ENCODE measurements at regions of chr15 and their contacts with region 1.

Region 1: GRCh38 chr15:48975472-48976419 is 12.0 kb upstream of the SHC4 start:
- DNase-seq: peak; percentile 89
- ATAC-seq: peak; percentile 98
- H3K4me3 Mint-ChIP-seq: peak overlapping the region; percentile 46
- H3K27ac Mint-ChIP-seq: no peak overlapping the region
- H3K4me1 Mint-ChIP-seq: peaks cover 2% of the 10 kb centered on the region
- H3K27me3 Mint-ChIP-seq: peaks cover 13% of the 10 kb centered on the region

Region 2: DNA sequence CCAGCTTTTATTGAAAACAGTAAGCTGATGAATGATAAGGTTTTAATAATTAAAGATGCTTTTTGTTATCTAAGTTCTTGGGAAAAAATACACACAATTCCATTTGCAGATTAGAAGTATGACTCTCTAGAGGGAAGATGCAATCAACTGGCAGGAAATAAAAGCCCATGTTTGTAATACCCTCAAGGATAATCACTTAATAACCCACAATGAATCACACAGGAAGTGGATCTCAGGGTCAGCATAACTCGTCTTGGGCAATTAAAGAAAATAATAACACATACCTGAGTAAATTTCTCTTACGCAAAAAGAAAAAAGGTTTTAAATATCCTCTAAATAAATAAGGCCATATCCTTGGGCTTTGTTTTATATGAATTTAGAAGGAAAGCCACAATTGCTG is 107.2 kb before region 1 on chr15:
- CTCF ChIA-PET with region 1: interaction called, 14 read pairs
- POLR2A ChIA-PET with region 1: no interaction called
- intact Hi-C with region 1: no loop called
- DNase-seq: no peak
- ATAC-seq: no peak
- H3K4me3 Mint-ChIP-seq: no peak overlapping the region
- H3K27ac Mint-ChIP-seq: no peak overlapping the region
- H3K4me1 Mint-ChIP-seq: no peaks in the 10 kb centered on the region
- H3K27me3 Mint-ChIP-seq: peaks cover 23% of the 10 kb centered on the region

Region 3: GRCh38 chr15:48905847-48906246 is 69.9 kb before region 1 on chr15:
- CTCF ChIA-PET with region 1: interaction called, 11 read pairs
- POLR2A ChIA-PET with region 1: no interaction called
- intact Hi-C with region 1: no loop called
- DNase-seq: no peak
- ATAC-seq: peak; percentile 39
- H3K4me3 Mint-ChIP-seq: no peak overlapping the region
- H3K27ac Mint-ChIP-seq: no peak overlapping the region
- H3K4me1 Mint-ChIP-seq: peaks cover 19% of the 10 kb centered on the region
- H3K27me3 Mint-ChIP-seq: peaks cover 3% of the 10 kb centered on the region

Region 4: GRCh38 chr15:48946088-48946839 is 29.5 kb before region 1 on chr15:
- CTCF ChIA-PET with region 1: interaction called, 25 read pairs
- POLR2A ChIA-PET with region 1: no interaction called
- intact Hi-C with region 1: no loop called
- DNase-seq: no peak
- ATAC-seq: peak; percentile 93
- H3K4me3 Mint-ChIP-seq: no peak overlapping the region
- H3K27ac Mint-ChIP-seq: peak overlapping the region; percentile 7
- H3K4me1 Mint-ChIP-seq: peaks cover 13% of the 10 kb centered on the region
- H3K27me3 Mint-ChIP-seq: peaks cover 20% of the 10 kb centered on the region

Region 5: GRCh38 chr15:48963524-48964113 is 12.1 kb before region 1 on chr15 and contains the start of gene SHC4:
- CTCF ChIA-PET with region 1: interaction called, 72 read pairs
- POLR2A ChIA-PET with region 1: interaction called, 4 read pairs
- intact Hi-C with region 1: no loop called
- DNase-seq: peak; percentile 29
- ATAC-seq: peak; percentile 45
- H3K4me3 Mint-ChIP-seq: peak within 1 kb of the TSS; percentile 69
- H3K27ac Mint-ChIP-seq: peak within 1 kb of the TSS; percentile 84
- H3K4me1 Mint-ChIP-seq: peaks cover 34% of the 10 kb centered on the region
- H3K27me3 Mint-ChIP-seq: peaks cover 38% of the 10 kb centered on the region
- total RNA-seq, gene SHC4: 1.4 TPM

Region 6: DNA sequence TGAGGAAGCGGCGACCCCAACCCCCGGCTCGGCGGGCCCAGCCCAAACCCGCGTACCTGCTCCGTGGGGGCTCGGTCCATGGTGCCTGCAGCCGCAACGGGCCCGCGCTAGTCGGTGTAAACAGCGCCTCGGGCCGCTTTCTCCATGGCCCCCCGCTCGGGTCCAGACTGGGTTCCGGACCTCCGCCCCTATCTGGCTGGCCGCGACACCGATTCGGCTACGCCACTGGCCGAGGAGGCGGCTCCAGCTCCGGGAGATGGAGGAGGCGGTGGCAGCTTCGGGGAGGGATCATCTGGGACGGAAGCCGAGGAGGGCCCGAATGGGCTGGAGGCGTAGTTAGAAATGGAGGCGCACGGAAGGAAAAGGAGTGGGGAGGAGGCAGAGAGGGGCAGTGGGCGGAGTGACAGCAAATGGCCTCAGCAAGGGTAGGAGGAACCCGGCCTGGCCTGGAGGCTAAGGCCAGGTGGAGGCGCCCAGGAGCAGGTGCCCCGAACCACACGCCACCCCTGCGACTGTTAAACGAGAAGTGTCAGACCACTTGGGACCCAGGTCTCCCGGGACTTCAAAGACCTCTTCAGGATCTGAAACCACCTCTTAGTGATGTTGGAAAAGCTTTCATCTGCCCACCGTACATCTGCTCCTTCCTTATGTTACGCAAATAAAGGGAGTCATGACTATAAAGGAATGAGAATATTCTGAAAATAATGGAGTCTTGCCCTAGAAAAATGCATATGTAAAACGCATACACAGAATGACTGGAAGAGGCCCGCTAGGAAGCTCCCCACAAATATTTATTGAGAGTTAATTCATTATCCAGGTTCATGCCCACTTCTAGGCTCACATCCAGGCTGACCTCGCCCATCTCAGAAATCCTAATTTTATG is 70.7 kb after region 1 on chr15 and contains the start of gene SECISBP2L:
- CTCF ChIA-PET with region 1: interaction called, 6 read pairs
- POLR2A ChIA-PET with region 1: no interaction called
- intact Hi-C with region 1: loop called in 1 of 2 experiments (anchors 2 kb)
- DNase-seq: peak; percentile 95
- ATAC-seq: peak; percentile 97
- H3K4me3 Mint-ChIP-seq: peak within 1 kb of the TSS; percentile 92
- H3K27ac Mint-ChIP-seq: peak within 1 kb of the TSS; percentile 84
- H3K4me1 Mint-ChIP-seq: peaks cover 22% of the 10 kb centered on the region
- H3K27me3 Mint-ChIP-seq: no peaks in the 10 kb centered on the region
- total RNA-seq, gene SECISBP2L: 22.4 to 36.8 TPM

Region 7: GRCh38 chr15:49421991-49422390 is 446.2 kb after region 1 on chr15:
- CTCF ChIA-PET with region 1: interaction called, 3 read pairs
- POLR2A ChIA-PET with region 1: no interaction called
- intact Hi-C with region 1: loop called in 1 of 2 experiments (anchors 1 kb)
- DNase-seq: peak; percentile 51
- ATAC-seq: peak; percentile 26
- H3K4me3 Mint-ChIP-seq: no peak overlapping the region
- H3K27ac Mint-ChIP-seq: no peak overlapping the region
- H3K4me1 Mint-ChIP-seq: peaks cover 4% of the 10 kb centered on the region
- H3K27me3 Mint-ChIP-seq: no peaks in the 10 kb centered on the region

Measured in activated CD4-positive, alpha-beta T cell treated with anti-CD3 and anti-CD28 coated beads for 36 hours (primary cell).